ENCODE measurements at regions of chr5 and their contacts with region 1.

Region 1: DNA sequence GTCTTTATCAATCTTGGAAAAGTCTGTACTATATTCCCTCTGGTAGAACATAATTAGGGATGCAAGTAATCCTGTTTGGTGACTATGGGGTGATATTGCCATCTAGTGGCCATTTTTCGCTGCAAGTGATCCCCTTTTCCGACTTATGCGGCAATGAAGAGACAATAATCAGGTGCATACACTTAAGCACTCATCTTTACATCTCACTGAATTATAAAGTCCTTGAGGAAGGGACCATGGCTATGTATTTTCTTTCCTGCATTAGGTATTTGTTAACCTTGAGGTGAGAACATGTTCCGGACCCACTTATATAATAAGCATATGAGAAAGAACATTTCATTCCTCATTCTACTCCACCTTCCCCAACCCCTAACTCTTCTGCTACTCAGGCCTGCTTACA is 19.6 kb upstream of the LIX1 start:
- DNase-seq: peak; percentile 77
- H3K4me3 ChIP-seq: no peak overlapping the region
- H3K27ac ChIP-seq: no peak overlapping the region
- H3K4me1 ChIP-seq: peaks cover 0 to 28% (median 12%) of the 10 kb centered on the region in 4 donors
- H3K27me3 ChIP-seq: no peaks in the 10 kb centered on the region
- CTCF ChIP-seq: peak; percentile 77 to 93 (median 86)
- EP300 ChIP-seq: no peak
- POLR2A ChIP-seq: no peak

Region 2: GRCh38 chr5:96601811-96602244 is 560.2 kb before region 1 on chr5:
- in situ Hi-C with region 1: loop called in 3 of 4 experiments (anchors 25 kb)
- intact Hi-C with region 1: no loop called
- DNase-seq: peak; percentile 33
- H3K4me3 ChIP-seq: no peak overlapping the region
- H3K27ac ChIP-seq: no peak overlapping the region
- H3K4me1 ChIP-seq: no peaks in the 10 kb centered on the region
- H3K27me3 ChIP-seq: no peaks in the 10 kb centered on the region
- CTCF ChIP-seq: peak; percentile 77 to 86 (median 83)
- EP300 ChIP-seq: no peak
- POLR2A ChIP-seq: no peak

Region 3: GRCh38 chr5:96614110-96614691 is 547.8 kb before region 1 on chr5:
- in situ Hi-C with region 1: loop called in 3 of 4 experiments (anchors 25 kb)
- intact Hi-C with region 1: loop called (anchors 10 kb)
- DNase-seq: peak; percentile 60
- H3K4me3 ChIP-seq: no peak overlapping the region
- H3K27ac ChIP-seq: peak overlapping the region; percentile 10 to 59 (median 50)
- H3K4me1 ChIP-seq: peaks cover 0 to 19% (median 9%) of the 10 kb centered on the region in 4 donors
- H3K27me3 ChIP-seq: no peaks in the 10 kb centered on the region
- CTCF ChIP-seq: peak; percentile 51 to 79 (median 55)
- EP300 ChIP-seq: no peak
- POLR2A ChIP-seq: no peak

Region 4: GRCh38 chr5:96743065-96743768 is 418.8 kb before region 1 on chr5:
- in situ Hi-C with region 1: loop called in 1 of 4 experiments (anchors 5 kb)
- intact Hi-C with region 1: no loop called
- DNase-seq: no peak
- H3K4me3 ChIP-seq: no peak overlapping the region
- H3K27ac ChIP-seq: peak overlapping the region in 3 of 4 donors; percentile 33 to 47 (median 34)
- H3K4me1 ChIP-seq: peaks cover 0 to 48% (median 6%) of the 10 kb centered on the region in 4 donors
- H3K27me3 ChIP-seq: no peaks in the 10 kb centered on the region
- CTCF ChIP-seq: no peak
- EP300 ChIP-seq: no peak
- POLR2A ChIP-seq: no peak

Region 5: DNA sequence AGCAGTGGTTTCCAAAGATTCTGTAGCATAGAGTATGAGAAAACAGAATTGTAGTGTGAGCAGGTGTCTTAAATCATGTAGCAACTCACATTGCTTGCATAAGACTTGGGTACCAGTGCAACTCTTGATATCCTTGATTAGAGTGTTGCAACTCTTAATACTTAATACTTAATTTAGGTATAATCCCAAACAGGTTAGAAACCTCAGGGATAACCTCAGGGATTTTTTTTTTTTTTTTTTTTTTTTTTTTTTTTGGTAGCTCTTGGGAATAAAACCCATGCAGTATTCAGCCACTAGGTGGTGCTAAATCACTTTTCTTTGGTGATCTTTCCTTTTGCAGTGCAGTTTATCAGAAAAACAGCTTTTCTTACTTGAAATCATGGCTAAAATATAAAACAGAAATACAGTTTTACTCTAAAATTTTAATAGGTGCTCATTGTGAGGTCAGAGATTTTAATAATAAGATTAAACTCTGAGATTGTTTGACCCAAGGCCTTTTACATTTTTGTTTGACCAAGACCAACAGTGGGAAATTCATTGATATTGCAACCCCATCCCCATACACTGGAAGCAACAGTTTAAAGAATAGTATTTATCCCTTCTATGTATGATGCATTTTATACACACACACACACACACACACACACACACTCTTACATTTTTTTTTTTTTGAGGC is 409.6 kb before region 1 on chr5:
- in situ Hi-C with region 1: loop called in 3 of 4 experiments (anchors 10 to 25 kb)
- intact Hi-C with region 1: no loop called
- DNase-seq: no peak
- H3K4me3 ChIP-seq: no peak overlapping the region
- H3K27ac ChIP-seq: peak overlapping the region in 1 of 4 donors; percentile 43
- H3K4me1 ChIP-seq: peaks cover 0 to 21% (median 4%) of the 10 kb centered on the region in 4 donors
- H3K27me3 ChIP-seq: no peaks in the 10 kb centered on the region
- CTCF ChIP-seq: peak; percentile 53 to 76 (median 69)
- EP300 ChIP-seq: no peak
- POLR2A ChIP-seq: no peak

Region 6: DNA sequence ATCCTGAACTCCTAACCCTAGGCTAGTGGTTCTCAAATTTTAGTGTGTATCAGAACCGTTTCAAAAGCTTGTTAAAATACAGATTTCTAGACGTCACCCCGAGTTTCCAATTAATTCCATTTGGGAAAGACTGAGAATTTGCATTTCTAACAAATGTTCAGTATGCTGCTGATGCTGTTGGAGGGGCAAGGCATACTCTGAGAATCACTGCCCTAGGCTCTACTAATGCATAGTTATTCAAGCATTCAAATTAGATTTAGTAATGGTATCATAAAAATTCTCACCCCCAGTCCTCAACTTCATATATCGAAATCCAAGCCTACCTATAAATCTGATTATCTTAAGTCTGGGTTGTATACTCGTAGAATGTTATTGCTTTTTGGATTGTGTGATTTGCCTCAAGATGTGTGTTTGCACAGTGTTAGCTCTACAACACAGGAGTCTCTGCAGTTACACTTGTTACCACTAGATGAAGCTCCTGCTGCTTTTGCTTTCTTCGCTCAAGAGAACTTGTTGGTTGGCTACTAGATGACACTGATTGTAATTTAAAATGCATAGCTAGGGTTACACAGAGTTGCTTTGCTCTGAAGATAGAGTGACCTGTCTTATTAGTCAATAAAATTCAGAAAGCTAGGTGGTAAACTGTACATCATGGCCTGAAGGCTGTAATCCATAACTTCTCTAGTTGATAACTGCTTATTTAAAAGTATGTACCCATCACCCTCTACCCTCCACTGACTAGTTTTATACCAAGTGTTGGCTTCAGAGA is 293.3 kb before region 1 on chr5:
- in situ Hi-C with region 1: loop called (anchors 10 to 25 kb)
- intact Hi-C with region 1: loop called (anchors 5 kb)
- DNase-seq: no peak
- H3K4me3 ChIP-seq: no peak overlapping the region
- H3K27ac ChIP-seq: no peak overlapping the region
- H3K4me1 ChIP-seq: peaks cover 0 to 8% (median 4%) of the 10 kb centered on the region in 4 donors
- H3K27me3 ChIP-seq: no peaks in the 10 kb centered on the region
- CTCF ChIP-seq: peak; percentile 86 to 92 (median 88)
- EP300 ChIP-seq: no peak
- POLR2A ChIP-seq: no peak

Region 7: GRCh38 chr5:96876292-96876850 is 285.7 kb before region 1 on chr5 and contains the start of gene ERAP2:
- in situ Hi-C with region 1: loop called (anchors 10 to 25 kb)
- intact Hi-C with region 1: no loop called
- DNase-seq: no peak
- H3K4me3 ChIP-seq: peak within 1 kb of the TSS; percentile 49 to 80 (median 68)
- H3K27ac ChIP-seq: peak within 1 kb of the TSS; percentile 78 to 88 (median 86)
- H3K4me1 ChIP-seq: peaks cover 9 to 44% (median 20%) of the 10 kb centered on the region in 4 donors
- H3K27me3 ChIP-seq: no peaks in the 10 kb centered on the region
- CTCF ChIP-seq: no peak
- EP300 ChIP-seq: no peak
- POLR2A ChIP-seq: no peak
- total RNA-seq, gene ERAP2: 7.1 to 39.1 (median 33.1) TPM

Region 8: DNA sequence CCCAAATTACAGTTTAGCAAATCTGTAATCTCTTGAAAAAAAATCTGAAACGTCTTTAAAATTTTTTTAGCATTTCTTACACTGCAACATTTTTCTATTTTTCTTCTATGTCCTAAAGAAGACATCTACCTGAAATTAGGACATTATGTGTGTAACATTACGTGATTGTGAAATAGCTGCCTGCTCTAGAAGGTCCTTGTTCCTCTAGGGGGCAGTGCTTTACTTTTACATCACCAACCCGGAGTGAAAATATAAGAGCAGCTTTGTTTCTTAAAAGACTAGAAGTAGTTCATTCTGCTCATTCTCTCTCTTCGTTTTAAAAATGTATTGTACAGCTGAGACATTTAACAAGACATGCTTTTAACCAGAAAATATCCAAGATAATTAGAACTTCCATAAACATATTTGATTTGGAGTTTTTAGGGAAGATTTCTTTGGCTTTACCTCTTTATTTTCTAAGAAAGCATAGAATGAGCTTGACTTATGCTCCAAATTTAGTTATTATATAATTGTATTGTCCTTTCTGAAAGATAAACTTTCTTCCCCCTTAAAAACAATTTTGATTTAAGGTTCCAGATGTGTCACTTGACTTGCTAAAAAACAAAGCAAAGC is 69.1 kb after region 1 on chr5:
- in situ Hi-C with region 1: no loop called
- intact Hi-C with region 1: no loop called
- DNase-seq: peak; percentile 18
- H3K4me3 ChIP-seq: no peak overlapping the region
- H3K27ac ChIP-seq: no peak overlapping the region
- H3K4me1 ChIP-seq: peaks cover 0 to 4% (median 1%) of the 10 kb centered on the region in 4 donors
- H3K27me3 ChIP-seq: no peaks in the 10 kb centered on the region
- CTCF ChIP-seq: peak; percentile 70 to 75 (median 74)
- EP300 ChIP-seq: no peak
- POLR2A ChIP-seq: no peak

Measured in transverse colon (tissue), 4 donors.